ENCODE measurements at regions of chr2 and their contacts with region 1.

Region 1: DNA sequence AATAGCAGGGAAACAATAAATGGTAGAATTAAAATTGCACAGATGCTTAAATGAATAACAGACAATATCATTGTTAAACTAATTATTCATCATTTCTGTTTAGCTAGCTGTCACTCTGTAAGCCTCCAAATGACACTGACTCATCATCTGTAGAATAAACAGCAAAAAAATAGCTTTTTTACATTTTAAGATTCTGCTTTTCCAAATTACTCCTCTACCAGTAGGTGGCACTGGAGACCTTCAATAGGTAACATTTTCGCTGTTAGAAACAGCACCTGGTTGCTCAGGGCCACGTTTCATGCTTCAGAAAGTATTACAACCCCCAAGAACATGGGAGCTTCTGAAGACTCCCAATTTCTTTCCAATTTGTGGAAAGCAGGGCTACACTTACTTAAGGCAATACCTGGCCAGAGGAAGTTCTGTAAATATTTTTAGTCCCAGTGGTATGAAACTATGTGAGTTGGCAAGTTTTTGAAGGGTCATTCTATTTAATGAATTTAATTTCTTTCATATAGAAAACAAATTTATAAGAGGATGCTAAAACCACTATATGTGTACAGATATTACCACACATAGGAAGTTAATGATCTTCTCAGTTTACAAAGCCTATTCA is 45.4 kb downstream of the TTN start:
- DNase-seq: peak; percentile 49
- ATAC-seq: peak; percentile 33; the same call in 1 of the 2 replicates
- H3K4me3 ChIP-seq: no peak overlapping the region
- H3K27ac ChIP-seq: no peak overlapping the region
- H3K4me1 ChIP-seq: no peaks in the 10 kb centered on the region
- H3K27me3 ChIP-seq: peaks cover 2% of the 10 kb centered on the region; the same call in 1 of the 2 replicates
- CTCF ChIP-seq: peak; percentile 66
- POLR2A ChIP-seq: no peak
- RAD21 ChIP-seq: peak; percentile 65

Region 2: DNA sequence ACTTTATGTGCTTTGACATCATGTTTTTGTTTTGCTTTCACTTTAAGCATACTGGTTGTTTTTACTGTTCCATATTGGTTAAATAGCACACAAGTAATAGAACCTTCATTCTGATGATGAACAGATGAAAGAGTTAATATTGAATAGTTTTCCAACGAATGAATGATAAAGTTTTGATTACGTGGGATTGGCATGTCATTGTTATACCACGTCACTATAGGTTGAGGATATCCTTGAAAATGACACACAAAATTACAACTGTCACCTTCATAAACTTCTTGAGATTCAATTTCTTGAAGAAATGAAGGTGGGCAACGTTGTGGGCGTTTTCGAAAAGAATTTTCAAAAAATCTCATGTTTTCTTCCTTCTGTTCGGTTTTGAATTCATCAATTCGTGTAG is 11.6 kb before region 1 on chr2:
- CTCF ChIA-PET with region 1: interaction called, 11 read pairs
- POLR2A ChIA-PET with region 1: no interaction called
- dilution Hi-C with region 1: no loop called
- in situ Hi-C with region 1: no loop called
- intact Hi-C with region 1: no loop called
- DNase-seq: no peak
- ATAC-seq: no peak
- H3K4me3 ChIP-seq: no peak overlapping the region
- H3K27ac ChIP-seq: no peak overlapping the region
- H3K4me1 ChIP-seq: no peaks in the 10 kb centered on the region
- H3K27me3 ChIP-seq: no peaks in the 10 kb centered on the region; the same call in 1 of the 2 replicates
- CTCF ChIP-seq: no peak
- POLR2A ChIP-seq: no peak
- RAD21 ChIP-seq: no peak

Region 3: GRCh38 chr2:178914259-178914849 is 152.5 kb after region 1 on chr2:
- CTCF ChIA-PET with region 1: interaction called, 5 read pairs
- POLR2A ChIA-PET with region 1: no interaction called
- dilution Hi-C with region 1: no loop called
- in situ Hi-C with region 1: no loop called
- intact Hi-C with region 1: loop called (anchors 1 kb)
- DNase-seq: peak; percentile 79
- ATAC-seq: peak; percentile 96
- H3K4me3 ChIP-seq: no peak overlapping the region
- H3K27ac ChIP-seq: no peak overlapping the region
- H3K4me1 ChIP-seq: no peaks in the 10 kb centered on the region
- H3K27me3 ChIP-seq: peaks cover 2% of the 10 kb centered on the region
- CTCF ChIP-seq: peak; percentile 75
- POLR2A ChIP-seq: no peak
- RAD21 ChIP-seq: peak; percentile 65

Region 4: DNA sequence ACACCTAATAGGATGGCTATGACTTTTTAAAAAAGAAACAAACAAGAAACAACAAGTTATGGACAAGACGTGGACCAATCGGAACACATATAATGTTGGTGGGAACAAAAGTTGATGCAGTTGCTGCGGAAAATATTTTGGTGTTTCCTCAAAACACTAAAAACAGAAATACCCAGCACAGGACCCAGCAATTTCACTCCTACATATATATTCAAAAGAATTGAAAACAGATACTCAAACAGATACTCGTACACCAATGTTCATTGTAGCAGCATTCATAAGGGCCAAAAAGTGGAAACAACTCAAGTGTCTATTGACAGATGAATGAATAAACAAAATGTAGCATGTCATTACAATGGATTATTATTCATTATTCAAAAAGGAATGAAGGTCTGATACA is 275.9 kb after region 1 on chr2:
- CTCF ChIA-PET with region 1: no interaction called
- POLR2A ChIA-PET with region 1: no interaction called
- dilution Hi-C with region 1: no loop called
- in situ Hi-C with region 1: no loop called
- intact Hi-C with region 1: no loop called
- DNase-seq: no peak
- ATAC-seq: no peak
- H3K4me3 ChIP-seq: no peak overlapping the region
- H3K27ac ChIP-seq: no peak overlapping the region
- H3K4me1 ChIP-seq: no peaks in the 10 kb centered on the region
- H3K27me3 ChIP-seq: no peaks in the 10 kb centered on the region
- CTCF ChIP-seq: no peak
- POLR2A ChIP-seq: no peak
- RAD21 ChIP-seq: no peak

Region 5: DNA sequence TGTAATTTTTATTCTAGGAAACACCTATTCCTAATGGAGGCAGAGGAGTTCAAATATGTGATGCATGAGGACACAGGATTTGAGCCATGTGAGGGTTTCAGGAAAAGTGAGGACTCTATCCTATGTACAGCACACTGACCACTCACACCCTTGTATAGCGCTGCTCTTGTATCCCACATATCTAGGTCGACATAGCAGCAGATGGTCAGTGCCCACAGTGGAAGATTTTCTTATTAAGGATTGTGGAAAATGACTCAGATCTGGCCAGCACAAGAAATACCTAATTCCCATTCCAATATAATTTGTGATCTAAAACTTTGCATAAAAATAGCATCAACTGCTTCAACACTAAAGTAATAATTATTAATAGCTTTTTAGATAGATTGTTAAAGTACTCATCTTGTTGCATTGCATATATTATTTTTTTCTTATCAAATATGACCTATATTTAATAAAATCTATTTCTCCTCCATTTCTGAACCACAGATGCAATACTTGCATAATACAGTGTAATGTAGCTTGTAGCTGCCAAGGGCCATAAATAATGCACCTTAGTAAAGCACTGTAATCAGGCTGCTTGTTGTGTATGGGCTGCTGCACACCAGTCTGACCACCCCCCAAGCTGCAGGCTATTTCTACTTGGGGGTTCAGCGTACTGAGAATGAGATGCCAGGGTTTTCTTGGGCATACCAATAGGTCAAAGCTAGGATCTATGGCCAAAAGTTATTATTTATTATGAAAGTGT is 1687.5 kb after region 1 on chr2:
- CTCF ChIA-PET with region 1: no interaction called
- POLR2A ChIA-PET with region 1: no interaction called
- dilution Hi-C with region 1: no loop called
- in situ Hi-C with region 1: no loop called
- intact Hi-C with region 1: no loop called
- DNase-seq: no peak
- ATAC-seq: no peak
- H3K4me3 ChIP-seq: no peak overlapping the region
- H3K27ac ChIP-seq: no peak overlapping the region
- H3K4me1 ChIP-seq: no peaks in the 10 kb centered on the region
- H3K27me3 ChIP-seq: no peaks in the 10 kb centered on the region
- CTCF ChIP-seq: no peak
- POLR2A ChIP-seq: no peak
- RAD21 ChIP-seq: no peak

Measured in IMR-90 (cell line).